ENCODE measurements at regions of chr1 and their contacts with region 1.

Region 1: DNA sequence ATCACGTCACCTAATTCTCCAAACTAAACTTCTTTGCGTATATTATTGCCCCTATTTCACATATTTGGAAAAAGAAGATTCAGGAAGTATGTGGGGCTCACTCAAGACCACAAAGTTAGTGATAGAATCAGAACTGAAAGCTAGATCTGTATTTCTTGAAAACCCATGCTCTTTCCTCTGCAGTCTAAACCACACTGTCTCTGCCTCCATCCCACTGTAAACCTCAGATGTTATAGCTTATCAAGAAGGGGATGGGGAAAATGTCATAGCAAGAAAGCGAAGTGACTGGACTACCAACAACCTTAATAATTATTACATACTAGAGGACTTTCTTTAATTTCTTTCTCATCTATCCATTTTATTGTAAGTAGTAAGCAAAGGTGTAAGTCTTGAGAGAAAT is 257.7 kb upstream of the SGIP1 start:
- DNase-seq: peak in 3 of 9 experiments; percentile 22 to 73 (median 55)
- ATAC-seq: peak; percentile 51
- H3K4me3 ChIP-seq: peak overlapping the region; percentile 4 to 10
- H3K4me3 Mint-ChIP-seq: peak overlapping the region; percentile 71
- H3K27ac ChIP-seq: peak overlapping the region; percentile 6 to 51
- H3K27ac Mint-ChIP-seq: peak overlapping the region; percentile 87
- H3K4me1 ChIP-seq: peaks cover 56% of the 10 kb centered on the region
- H3K4me1 Mint-ChIP-seq: peaks cover 91% of the 10 kb centered on the region
- H3K27me3 ChIP-seq: no peaks in the 10 kb centered on the region
- H3K27me3 Mint-ChIP-seq: no peaks in the 10 kb centered on the region
- CTCF ChIP-seq: no peak

Region 2: GRCh38 chr1:64669098-64669926 is 1606.9 kb before region 1 on chr1:
- CTCF ChIA-PET with region 1: no interaction called
- POLR2A ChIA-PET with region 1: no interaction called
- intact Hi-C with region 1: no loop called
- DNase-seq: no peak
- ATAC-seq: no peak
- H3K4me3 ChIP-seq: no peak overlapping the region
- H3K4me3 Mint-ChIP-seq: no peak overlapping the region
- H3K27ac ChIP-seq: no peak overlapping the region
- H3K27ac Mint-ChIP-seq: no peak overlapping the region
- H3K4me1 ChIP-seq: no peaks in the 10 kb centered on the region
- H3K4me1 Mint-ChIP-seq: no peaks in the 10 kb centered on the region
- H3K27me3 ChIP-seq: no peaks in the 10 kb centered on the region
- H3K27me3 Mint-ChIP-seq: no peaks in the 10 kb centered on the region
- CTCF ChIP-seq: no peak

Region 3: GRCh38 chr1:66291047-66291868 is 15.0 kb after region 1 on chr1:
- CTCF ChIA-PET with region 1: interaction called, 3 read pairs
- POLR2A ChIA-PET with region 1: interaction called, 11 read pairs
- intact Hi-C with region 1: no loop called
- DNase-seq: no peak
- ATAC-seq: no peak
- H3K4me3 ChIP-seq: no peak overlapping the region
- H3K4me3 Mint-ChIP-seq: no peak overlapping the region
- H3K27ac ChIP-seq: no peak overlapping the region
- H3K27ac Mint-ChIP-seq: no peak overlapping the region
- H3K4me1 ChIP-seq: peaks cover 3% of the 10 kb centered on the region
- H3K4me1 Mint-ChIP-seq: peaks cover 28% of the 10 kb centered on the region
- H3K27me3 ChIP-seq: no peaks in the 10 kb centered on the region
- H3K27me3 Mint-ChIP-seq: no peaks in the 10 kb centered on the region
- CTCF ChIP-seq: no peak

Region 4: GRCh38 chr1:66300972-66301451 is 24.8 kb after region 1 on chr1:
- CTCF ChIA-PET with region 1: interaction called, 12 read pairs
- POLR2A ChIA-PET with region 1: no interaction called
- intact Hi-C with region 1: loop called in 1 of 2 experiments (anchors 2 kb)
- DNase-seq: peak in 3 of 9 experiments; percentile 24 to 76 (median 60)
- ATAC-seq: peak; percentile 86
- H3K4me3 ChIP-seq: peak overlapping the region in 1 of 2 experiments; percentile 20
- H3K4me3 Mint-ChIP-seq: peak overlapping the region; percentile 79
- H3K27ac ChIP-seq: peak overlapping the region in 1 of 2 experiments; percentile 59
- H3K27ac Mint-ChIP-seq: peak overlapping the region; percentile 85
- H3K4me1 ChIP-seq: peaks cover 28% of the 10 kb centered on the region
- H3K4me1 Mint-ChIP-seq: peaks cover 31% of the 10 kb centered on the region
- H3K27me3 ChIP-seq: no peaks in the 10 kb centered on the region
- H3K27me3 Mint-ChIP-seq: no peaks in the 10 kb centered on the region
- CTCF ChIP-seq: no peak

Measured in CD8-positive, alpha-beta T cell (primary cell).